Gastrocnemius medialis (tissue), 4 donors: ENCODE measurements at regions of chr4 and their contacts with region 1.

Region 1: GRCh38 chr4:16240300-16240699 is 14.0 kb upstream of the TAPT1 start:
- DNase-seq: no peak
- ATAC-seq: no peak
- H3K4me3 ChIP-seq: no peak overlapping the region
- H3K27ac ChIP-seq: no peak overlapping the region
- H3K4me1 ChIP-seq: no peaks in the 10 kb centered on the region
- H3K27me3 ChIP-seq: no peaks in the 10 kb centered on the region
- CTCF ChIP-seq: no peak
- POLR2A ChIP-seq: no peak

Region 2: DNA sequence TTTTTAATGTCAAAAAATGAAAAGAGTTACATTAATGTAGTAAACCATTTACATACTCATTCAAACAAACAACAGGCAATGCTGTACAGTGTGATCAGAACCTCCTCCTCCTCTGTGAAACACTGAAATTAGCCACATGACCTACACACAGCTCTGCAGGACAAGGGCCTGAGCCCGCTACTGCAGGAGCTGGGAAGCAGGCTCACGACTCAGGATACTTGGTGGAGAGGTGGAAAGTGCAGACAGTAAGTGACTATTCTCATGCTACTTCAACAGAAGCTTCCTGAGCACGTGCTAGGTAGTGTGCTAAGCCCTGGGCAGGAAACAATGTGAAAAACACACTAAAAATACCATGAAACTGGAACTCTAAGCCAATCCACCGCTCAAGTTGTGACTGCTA is 70.8 kb before region 1 on chr4:
- in situ Hi-C with region 1: no loop called
- intact Hi-C with region 1: no loop called
- DNase-seq: no peak
- ATAC-seq: no peak
- H3K4me3 ChIP-seq: no peak overlapping the region
- H3K27ac ChIP-seq: no peak overlapping the region
- H3K4me1 ChIP-seq: no peaks in the 10 kb centered on the region
- H3K27me3 ChIP-seq: no peaks in the 10 kb centered on the region
- CTCF ChIP-seq: no peak
- POLR2A ChIP-seq: no peak

Region 3: GRCh38 chr4:16196478-16197393 is 43.6 kb before region 1 on chr4:
- in situ Hi-C with region 1: no loop called
- intact Hi-C with region 1: no loop called
- DNase-seq: no peak
- ATAC-seq: peak; percentile 80 to 90
- H3K4me3 ChIP-seq: peak overlapping the region in 1 of 4 donors; percentile 19
- H3K27ac ChIP-seq: peak overlapping the region in 3 of 4 donors; percentile 12 to 44 (median 33)
- H3K4me1 ChIP-seq: peaks cover 40 to 48% of the 10 kb centered on the region in 2 donors
- H3K27me3 ChIP-seq: no peaks in the 10 kb centered on the region
- CTCF ChIP-seq: peak in 3 of 5 experiments; percentile 19 to 35 (median 32)
- POLR2A ChIP-seq: no peak

Region 4: DNA sequence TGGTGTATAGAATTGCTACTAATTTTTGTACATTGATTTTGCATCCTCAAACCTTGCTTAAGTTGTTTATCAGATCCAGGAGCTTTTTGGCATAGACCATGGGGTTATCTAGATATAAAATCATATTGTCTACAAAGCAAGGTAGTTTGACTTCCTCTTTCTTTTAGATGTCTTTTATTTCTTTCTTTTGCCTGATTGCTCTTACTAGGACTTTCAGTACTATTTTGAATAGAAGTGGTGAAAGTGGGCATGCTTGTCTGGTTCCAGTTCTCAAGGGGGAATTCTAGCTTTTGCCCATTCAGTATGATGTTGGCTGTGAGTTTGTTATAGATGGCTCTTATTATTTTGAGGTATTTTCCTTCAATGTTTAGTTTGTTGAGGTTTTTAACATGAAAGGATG is 1969.1 kb after region 1 on chr4:
- in situ Hi-C with region 1: no loop called
- intact Hi-C with region 1: loop called (anchors 10 kb)
- DNase-seq: no peak
- ATAC-seq: no peak
- H3K4me3 ChIP-seq: no peak overlapping the region
- H3K27ac ChIP-seq: no peak overlapping the region
- H3K4me1 ChIP-seq: no peaks in the 10 kb centered on the region
- H3K27me3 ChIP-seq: no peaks in the 10 kb centered on the region
- CTCF ChIP-seq: no peak
- POLR2A ChIP-seq: no peak